ENCODE measurements at regions of chr4 and their contacts with region 1.

Region 1: DNA sequence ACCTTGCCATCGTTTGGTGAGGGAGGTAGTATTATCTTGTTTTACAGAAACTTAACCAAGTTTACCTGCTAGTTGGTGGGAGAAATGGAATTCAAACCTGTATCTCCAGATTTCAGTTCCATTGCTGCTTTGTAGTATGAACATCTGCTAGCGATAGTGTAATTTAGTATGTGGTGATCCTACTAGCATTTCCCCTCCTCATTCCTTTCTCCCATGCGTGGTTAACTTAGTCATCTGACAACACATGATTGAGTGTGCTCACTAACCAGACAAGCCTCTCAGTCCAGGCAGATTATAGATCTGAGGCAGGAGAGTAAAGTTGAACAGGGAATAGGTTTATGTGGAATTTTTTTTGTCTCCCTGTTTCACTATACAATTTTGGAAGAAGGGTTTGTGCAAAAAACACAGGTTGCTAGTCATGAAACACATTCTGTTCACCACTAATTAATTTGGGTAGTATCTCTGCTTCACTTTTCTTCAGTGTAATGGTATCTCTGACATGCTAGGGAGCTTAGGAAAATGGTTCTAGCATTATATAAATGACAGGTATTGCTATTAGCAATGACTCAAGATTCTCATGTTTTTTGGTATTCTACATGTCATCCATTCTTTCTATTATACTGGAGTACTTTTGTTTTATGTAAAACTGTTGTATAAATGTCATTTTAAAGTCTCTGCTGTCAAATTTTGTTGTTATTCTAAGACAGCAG is 21.7 kb downstream of the RBPJ start:
- DNase-seq: no peak
- ATAC-seq: no peak
- H3K4me3 ChIP-seq: no peak overlapping the region
- H3K4me3 Mint-ChIP-seq: no peak overlapping the region
- H3K27ac ChIP-seq: no peak overlapping the region
- H3K27ac Mint-ChIP-seq: no peak overlapping the region
- H3K4me1 ChIP-seq: peaks cover 5% of the 10 kb centered on the region
- H3K4me1 Mint-ChIP-seq: peaks cover 56% of the 10 kb centered on the region
- H3K27me3 ChIP-seq: no peaks in the 10 kb centered on the region
- H3K27me3 Mint-ChIP-seq: no peaks in the 10 kb centered on the region
- CTCF ChIP-seq: no peak

Region 2: GRCh38 chr4:26130173-26130572 is 212.3 kb before region 1 on chr4:
- CTCF ChIA-PET with region 1: no interaction called
- POLR2A ChIA-PET with region 1: no interaction called
- intact Hi-C with region 1: no loop called
- DNase-seq: peak in 1 of 9 experiments; percentile 4
- ATAC-seq: no peak
- H3K4me3 ChIP-seq: no peak overlapping the region
- H3K4me3 Mint-ChIP-seq: no peak overlapping the region
- H3K27ac ChIP-seq: no peak overlapping the region
- H3K27ac Mint-ChIP-seq: no peak overlapping the region
- H3K4me1 ChIP-seq: peaks cover 14% of the 10 kb centered on the region
- H3K4me1 Mint-ChIP-seq: peaks cover 33% of the 10 kb centered on the region
- H3K27me3 ChIP-seq: no peaks in the 10 kb centered on the region
- H3K27me3 Mint-ChIP-seq: peaks cover 2% of the 10 kb centered on the region
- CTCF ChIP-seq: no peak

Region 3: DNA sequence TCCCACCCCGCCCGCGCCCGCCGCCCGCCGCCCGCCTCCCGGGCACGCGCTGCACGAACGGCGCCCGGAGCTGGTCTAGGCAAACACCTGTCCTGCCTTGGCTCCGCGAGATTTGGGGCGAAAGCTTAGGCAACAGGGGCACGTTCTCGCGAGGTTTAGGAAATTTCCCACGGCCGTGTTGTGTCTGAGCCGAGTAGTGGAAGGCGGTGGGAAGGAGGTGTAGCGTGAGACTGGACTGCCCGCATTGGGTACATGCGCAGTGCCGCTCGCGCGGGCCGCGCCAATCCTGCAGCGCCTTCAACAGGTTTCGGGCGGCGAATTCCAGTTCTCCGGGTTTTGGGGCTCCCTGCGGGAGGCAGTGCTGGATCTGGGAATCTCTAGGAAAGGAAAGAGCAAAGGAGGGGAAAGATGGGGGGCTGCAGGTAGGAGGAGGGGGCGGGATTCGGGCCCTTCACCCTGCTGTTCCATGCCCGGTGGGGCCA is 23.0 kb before region 1 on chr4:
- CTCF ChIA-PET with region 1: no interaction called
- POLR2A ChIA-PET with region 1: no interaction called
- intact Hi-C with region 1: no loop called
- DNase-seq: peak; percentile 91 to 99 (median 96)
- ATAC-seq: peak; percentile 60
- H3K4me3 ChIP-seq: peak overlapping the region; percentile 91 to 100
- H3K4me3 Mint-ChIP-seq: peak overlapping the region; percentile 99
- H3K27ac ChIP-seq: peak overlapping the region; percentile 83 to 89
- H3K27ac Mint-ChIP-seq: peak overlapping the region; percentile 100
- H3K4me1 ChIP-seq: peaks cover 14% of the 10 kb centered on the region
- H3K4me1 Mint-ChIP-seq: peaks cover 37% of the 10 kb centered on the region
- H3K27me3 ChIP-seq: no peaks in the 10 kb centered on the region
- H3K27me3 Mint-ChIP-seq: no peaks in the 10 kb centered on the region
- CTCF ChIP-seq: no peak

Region 4: DNA sequence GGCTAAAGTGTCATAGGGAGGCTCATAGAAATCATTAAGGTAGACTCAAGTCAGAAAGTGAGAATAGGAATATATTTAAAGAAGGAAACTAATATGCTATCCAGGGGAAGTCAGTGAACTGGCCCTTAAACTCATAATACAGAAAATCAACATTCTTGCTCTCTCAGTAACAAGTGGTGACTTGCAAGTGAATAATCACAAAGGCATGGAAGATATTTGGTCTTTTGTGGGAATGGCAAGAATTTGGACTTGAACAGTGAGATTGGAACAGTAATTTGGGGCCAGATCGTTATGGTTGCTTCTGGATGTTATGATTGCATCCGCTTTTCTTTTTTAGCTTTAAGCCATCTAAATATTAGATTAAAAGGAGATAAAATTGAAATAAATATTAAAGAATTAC is 345.2 kb after region 1 on chr4:
- CTCF ChIA-PET with region 1: no interaction called
- POLR2A ChIA-PET with region 1: no interaction called
- intact Hi-C with region 1: loop called in 1 of 2 experiments (anchors 5 kb)
- DNase-seq: no peak
- ATAC-seq: no peak
- H3K4me3 ChIP-seq: no peak overlapping the region
- H3K4me3 Mint-ChIP-seq: no peak overlapping the region
- H3K27ac ChIP-seq: no peak overlapping the region
- H3K27ac Mint-ChIP-seq: no peak overlapping the region
- H3K4me1 ChIP-seq: no peaks in the 10 kb centered on the region
- H3K4me1 Mint-ChIP-seq: no peaks in the 10 kb centered on the region
- H3K27me3 ChIP-seq: no peaks in the 10 kb centered on the region
- H3K27me3 Mint-ChIP-seq: no peaks in the 10 kb centered on the region
- CTCF ChIP-seq: no peak

Measured in CD8-positive, alpha-beta T cell (primary cell).